Ascending aorta (tissue), 2 donors: ENCODE measurements at regions of chrX and their contacts with region 1.

Region 1: GRCh38 chrX:41084044-41084892 is 977 bp upstream of the USP9X start:
- DNase-seq: peak; percentile 94 to 99
- H3K4me3 ChIP-seq: peak overlapping the region; percentile 82 to 84
- H3K27ac ChIP-seq: peak overlapping the region; percentile 95 to 99
- H3K4me1 ChIP-seq: peaks cover 0 to 17% of the 10 kb centered on the region in 2 donors
- H3K27me3 ChIP-seq: no peaks in the 10 kb centered on the region
- CTCF ChIP-seq: no peak

Region 2: DNA sequence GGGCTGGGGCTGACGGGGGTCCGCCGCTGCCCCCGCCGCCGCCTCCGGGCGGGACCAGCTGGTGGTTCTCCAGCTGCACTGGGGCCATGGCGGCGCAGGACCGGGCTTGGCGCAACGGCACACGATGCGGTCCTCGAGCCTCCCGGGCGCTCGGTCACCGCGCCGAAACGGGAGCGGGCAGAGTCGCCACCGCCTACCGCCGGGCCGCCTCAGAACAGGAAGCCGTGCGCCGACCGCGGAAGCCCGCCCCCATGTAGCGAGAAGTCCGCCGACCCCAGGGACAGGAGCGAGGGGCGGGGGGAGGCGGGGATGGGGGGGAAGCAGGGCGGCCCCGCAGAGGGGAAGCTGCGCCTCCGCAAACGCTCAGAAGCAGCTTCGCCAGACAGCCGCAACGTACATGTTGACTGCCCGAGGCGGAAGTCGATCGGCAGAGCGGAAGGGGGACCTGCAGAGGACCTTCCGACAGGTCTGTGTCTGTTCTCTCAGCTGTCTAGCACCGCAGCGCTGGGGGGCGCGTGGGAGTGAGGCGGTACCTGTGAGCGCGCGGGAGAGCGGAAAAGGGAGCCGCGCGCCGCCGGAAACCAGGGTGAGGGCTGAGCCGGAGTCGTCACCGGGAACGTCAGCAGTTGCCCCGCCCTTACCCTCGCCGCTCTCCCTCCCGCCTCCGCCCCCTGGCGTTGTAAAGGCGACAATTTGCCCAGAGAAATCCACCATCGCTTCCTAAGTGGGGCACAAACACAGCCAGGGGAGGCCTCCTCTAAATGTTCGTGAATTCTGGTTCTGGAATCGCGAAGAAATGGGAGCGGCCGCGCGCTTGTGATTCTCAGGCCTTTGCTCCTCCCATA is 348.7 kb before region 1 on chrX and contains the start of gene MED14:
- intact Hi-C with region 1: loop called (anchors 1 kb)
- DNase-seq: peak; percentile 79 to 93
- H3K4me3 ChIP-seq: peak within 1 kb of the TSS; percentile 77 to 96
- H3K27ac ChIP-seq: peak within 1 kb of the TSS; percentile 84 to 94
- H3K4me1 ChIP-seq: no peaks in the 10 kb centered on the region
- H3K27me3 ChIP-seq: no peaks in the 10 kb centered on the region
- CTCF ChIP-seq: peak; percentile 37 to 52 (median 46)
- total RNA-seq, gene MED14: 10.5 TPM

Region 3: DNA sequence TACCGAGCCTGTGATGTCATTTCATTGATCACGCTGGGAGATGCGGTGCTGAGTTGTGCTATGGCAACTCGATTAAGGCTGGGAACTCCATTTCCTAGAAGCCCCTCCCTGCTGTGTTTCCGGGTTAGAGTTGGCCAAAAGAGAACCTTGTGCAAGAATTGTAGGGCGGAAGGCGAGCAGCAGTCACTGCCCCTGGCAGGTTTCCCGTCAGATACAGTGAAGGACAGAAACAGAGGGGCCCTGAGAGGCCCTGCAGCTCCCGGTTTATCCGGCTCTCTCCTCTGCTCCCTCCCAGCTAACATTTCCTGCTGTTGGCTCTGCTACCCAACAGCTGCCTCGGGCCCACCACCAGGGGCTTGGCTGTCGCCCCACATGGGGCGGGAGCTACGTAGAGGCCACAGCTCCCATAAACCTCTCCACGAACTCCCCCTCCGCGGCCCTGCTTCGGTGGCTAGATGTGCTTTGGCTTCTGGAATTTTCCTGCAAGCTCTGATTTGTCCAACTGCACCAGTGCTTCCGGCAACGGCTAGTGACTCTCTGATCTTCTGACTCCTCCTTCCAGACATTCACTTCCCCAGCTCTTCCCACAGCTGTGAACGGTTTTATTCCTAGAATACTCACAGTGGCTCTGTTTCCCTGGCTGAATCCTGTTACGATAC is 74.0 kb before region 1 on chrX:
- intact Hi-C with region 1: loop called (anchors 1 kb)
- DNase-seq: peak; percentile 22 to 88
- H3K4me3 ChIP-seq: peak overlapping the region; percentile 47 to 58
- H3K27ac ChIP-seq: peak overlapping the region; percentile 83 to 85
- H3K4me1 ChIP-seq: peaks cover 0 to 3% of the 10 kb centered on the region in 2 donors
- H3K27me3 ChIP-seq: no peaks in the 10 kb centered on the region
- CTCF ChIP-seq: no peak

Region 4: GRCh38 chrX:41333744-41334259 is 249.5 kb after region 1 on chrX and contains the start of gene DDX3X:
- intact Hi-C with region 1: loop called (anchors 2 kb)
- DNase-seq: peak; percentile 60 to 93
- H3K4me3 ChIP-seq: peak within 1 kb of the TSS; percentile 82 to 99
- H3K27ac ChIP-seq: peak within 1 kb of the TSS; percentile 99 to 100
- H3K4me1 ChIP-seq: peaks cover 0 to 11% of the 10 kb centered on the region in 2 donors
- H3K27me3 ChIP-seq: no peaks in the 10 kb centered on the region
- CTCF ChIP-seq: peak; percentile 28 to 63 (median 47)
- total RNA-seq, gene DDX3X: 89.3 TPM

Region 5: GRCh38 chrX:41406211-41406610 is 321.9 kb after region 1 on chrX:
- intact Hi-C with region 1: no loop called
- DNase-seq: no peak
- H3K4me3 ChIP-seq: no peak overlapping the region
- H3K27ac ChIP-seq: no peak overlapping the region
- H3K4me1 ChIP-seq: no peaks in the 10 kb centered on the region
- H3K27me3 ChIP-seq: no peaks in the 10 kb centered on the region
- CTCF ChIP-seq: no peak

Region 6: DNA sequence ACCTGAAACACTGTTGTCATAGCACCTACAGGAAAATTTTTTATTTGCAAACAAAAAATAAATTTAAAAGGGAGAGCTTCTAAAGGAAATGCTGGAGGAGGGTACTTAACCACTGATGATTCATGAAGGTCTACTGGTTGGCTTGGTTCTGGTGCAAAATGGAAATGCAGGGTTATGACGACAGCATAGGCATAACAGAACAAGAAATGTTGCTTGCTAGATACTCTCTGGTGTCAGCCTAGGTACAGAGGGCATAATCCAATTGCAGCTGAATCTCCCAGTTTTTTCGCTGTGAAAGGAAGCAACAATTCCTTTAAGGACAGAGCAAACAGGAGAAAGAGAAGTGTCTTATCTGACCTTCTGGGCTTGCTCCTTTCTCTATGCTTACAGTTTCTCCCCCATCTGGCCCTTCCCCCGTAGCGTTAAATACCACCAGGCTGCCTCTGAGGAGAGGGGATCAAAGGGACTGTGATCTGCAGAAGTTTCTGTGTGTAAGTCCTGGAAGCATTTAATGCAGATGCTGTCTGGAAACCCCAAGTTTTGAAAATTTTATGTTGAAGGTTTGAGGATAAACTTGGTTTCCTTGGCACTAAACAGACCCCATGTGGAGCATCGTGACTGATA is 862.8 kb after region 1 on chrX:
- intact Hi-C with region 1: no loop called
- DNase-seq: no peak
- H3K4me3 ChIP-seq: no peak overlapping the region
- H3K27ac ChIP-seq: no peak overlapping the region
- H3K4me1 ChIP-seq: no peaks in the 10 kb centered on the region
- H3K27me3 ChIP-seq: no peaks in the 10 kb centered on the region
- CTCF ChIP-seq: no peak